CD4-positive, alpha-beta memory T cell (primary cell): ENCODE measurements at regions of chr20 and their contacts with region 1.

Region 1: GRCh38 chr20:47356526-47357295 is at the start of gene ZMYND8:
- DNase-seq: peak; percentile 92 to 100 (median 97)
- H3K4me3 ChIP-seq: peak within 1 kb of the TSS; percentile 39 to 59
- H3K4me3 Mint-ChIP-seq: peak within 1 kb of the TSS; percentile 91 to 98 (median 96)
- H3K27ac ChIP-seq: peak within 1 kb of the TSS; percentile 76
- H3K27ac Mint-ChIP-seq: peak within 1 kb of the TSS; percentile 92 to 100 (median 99)
- H3K4me1 ChIP-seq: peaks cover 70% of the 10 kb centered on the region
- H3K4me1 Mint-ChIP-seq: peaks cover 13 to 55% (median 30%) of the 10 kb centered on the region in 4 donors
- H3K27me3 ChIP-seq: no peaks in the 10 kb centered on the region
- H3K27me3 Mint-ChIP-seq: no peaks in the 10 kb centered on the region
- total RNA-seq, gene ZMYND8: 47.7 to 48.5 TPM

Region 2: GRCh38 chr20:47317127-47317895 is 39.4 kb before region 1 on chr20:
- CTCF ChIA-PET with region 1: no interaction called
- POLR2A ChIA-PET with region 1: interaction called, 4 read pairs
- intact Hi-C with region 1: loop called (anchors 5 kb)
- DNase-seq: peak; percentile 4 to 63 (median 21)
- H3K4me3 ChIP-seq: no peak overlapping the region
- H3K4me3 Mint-ChIP-seq: peak overlapping the region in 4 of 8 donors; percentile 21 to 59 (median 46)
- H3K27ac ChIP-seq: peak overlapping the region; percentile 12
- H3K27ac Mint-ChIP-seq: peak overlapping the region; percentile 53 to 91 (median 78)
- H3K4me1 ChIP-seq: peaks cover 57% of the 10 kb centered on the region
- H3K4me1 Mint-ChIP-seq: peaks cover 42 to 73% (median 59%) of the 10 kb centered on the region in 4 donors
- H3K27me3 ChIP-seq: no peaks in the 10 kb centered on the region
- H3K27me3 Mint-ChIP-seq: no peaks in the 10 kb centered on the region

Region 3: GRCh38 chr20:47438577-47439381 is 82.1 kb after region 1 on chr20:
- CTCF ChIA-PET with region 1: no interaction called
- POLR2A ChIA-PET with region 1: no interaction called
- intact Hi-C with region 1: no loop called
- DNase-seq: peak in 2 of 5 donors; percentile 4 to 16
- H3K4me3 ChIP-seq: no peak overlapping the region
- H3K4me3 Mint-ChIP-seq: peak overlapping the region in 1 of 8 donors; percentile 31
- H3K27ac ChIP-seq: no peak overlapping the region
- H3K27ac Mint-ChIP-seq: peak overlapping the region in 4 of 7 donors; percentile 7 to 80 (median 44)
- H3K4me1 ChIP-seq: peaks cover 5% of the 10 kb centered on the region
- H3K4me1 Mint-ChIP-seq: peaks cover 6 to 7% (median 6%) of the 10 kb centered on the region in 4 donors
- H3K27me3 ChIP-seq: no peaks in the 10 kb centered on the region
- H3K27me3 Mint-ChIP-seq: no peaks in the 10 kb centered on the region